Activated naive CD4-positive, alpha-beta T cell treated with anti-CD3 and anti-CD28 coated beads for 36 hours (primary cell): ENCODE measurements at regions of chr4 and their contacts with region 1.

Region 1: GRCh38 chr4:38310446-38311043 is 350.3 kb downstream of the PTTG2 start:
- DNase-seq: peak; percentile 89
- H3K4me3 Mint-ChIP-seq: peak overlapping the region; percentile 10
- H3K27ac Mint-ChIP-seq: peak overlapping the region; percentile 72
- H3K4me1 Mint-ChIP-seq: peaks cover 65% of the 10 kb centered on the region
- H3K27me3 Mint-ChIP-seq: peaks cover 2% of the 10 kb centered on the region

Region 2: GRCh38 chr4:38062088-38062893 is 248.3 kb before region 1 on chr4:
- CTCF ChIA-PET with region 1: interaction called, 9 read pairs
- intact Hi-C with region 1: loop called (anchors 2 kb)
- DNase-seq: peak; percentile 84
- H3K4me3 Mint-ChIP-seq: peak overlapping the region; percentile 79
- H3K27ac Mint-ChIP-seq: peak overlapping the region; percentile 75
- H3K4me1 Mint-ChIP-seq: peaks cover 12% of the 10 kb centered on the region
- H3K27me3 Mint-ChIP-seq: no peaks in the 10 kb centered on the region

Region 3: GRCh38 chr4:38334810-38335537 is 24.4 kb after region 1 on chr4:
- CTCF ChIA-PET with region 1: interaction called, 4 read pairs
- intact Hi-C with region 1: loop called (anchors 1 kb)
- DNase-seq: no peak
- H3K4me3 Mint-ChIP-seq: no peak overlapping the region
- H3K27ac Mint-ChIP-seq: no peak overlapping the region
- H3K4me1 Mint-ChIP-seq: peaks cover 52% of the 10 kb centered on the region
- H3K27me3 Mint-ChIP-seq: no peaks in the 10 kb centered on the region

Region 4: DNA sequence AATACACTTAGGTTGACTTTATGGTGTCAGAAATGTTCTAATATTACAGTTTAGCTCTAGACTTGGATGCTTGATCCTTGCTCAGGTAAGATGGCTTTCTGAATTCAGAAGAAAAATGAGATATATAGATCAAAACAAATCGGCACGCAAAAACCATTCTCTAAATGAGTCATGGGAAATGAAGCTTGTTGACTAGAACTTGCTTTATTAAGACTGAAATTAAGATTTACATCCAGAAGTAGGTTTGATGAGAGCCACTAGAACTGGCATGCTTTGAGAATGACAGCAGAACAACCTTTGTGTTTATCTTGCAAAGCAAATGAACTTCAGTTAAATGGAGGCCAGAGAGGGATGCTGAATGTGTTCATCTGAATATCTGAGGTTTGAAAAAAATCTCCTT is 48.6 kb after region 1 on chr4:
- CTCF ChIA-PET with region 1: no interaction called
- intact Hi-C with region 1: loop called (anchors 1 kb)
- DNase-seq: no peak
- H3K4me3 Mint-ChIP-seq: no peak overlapping the region
- H3K27ac Mint-ChIP-seq: no peak overlapping the region
- H3K4me1 Mint-ChIP-seq: peaks cover 10% of the 10 kb centered on the region
- H3K27me3 Mint-ChIP-seq: no peaks in the 10 kb centered on the region

Region 5: DNA sequence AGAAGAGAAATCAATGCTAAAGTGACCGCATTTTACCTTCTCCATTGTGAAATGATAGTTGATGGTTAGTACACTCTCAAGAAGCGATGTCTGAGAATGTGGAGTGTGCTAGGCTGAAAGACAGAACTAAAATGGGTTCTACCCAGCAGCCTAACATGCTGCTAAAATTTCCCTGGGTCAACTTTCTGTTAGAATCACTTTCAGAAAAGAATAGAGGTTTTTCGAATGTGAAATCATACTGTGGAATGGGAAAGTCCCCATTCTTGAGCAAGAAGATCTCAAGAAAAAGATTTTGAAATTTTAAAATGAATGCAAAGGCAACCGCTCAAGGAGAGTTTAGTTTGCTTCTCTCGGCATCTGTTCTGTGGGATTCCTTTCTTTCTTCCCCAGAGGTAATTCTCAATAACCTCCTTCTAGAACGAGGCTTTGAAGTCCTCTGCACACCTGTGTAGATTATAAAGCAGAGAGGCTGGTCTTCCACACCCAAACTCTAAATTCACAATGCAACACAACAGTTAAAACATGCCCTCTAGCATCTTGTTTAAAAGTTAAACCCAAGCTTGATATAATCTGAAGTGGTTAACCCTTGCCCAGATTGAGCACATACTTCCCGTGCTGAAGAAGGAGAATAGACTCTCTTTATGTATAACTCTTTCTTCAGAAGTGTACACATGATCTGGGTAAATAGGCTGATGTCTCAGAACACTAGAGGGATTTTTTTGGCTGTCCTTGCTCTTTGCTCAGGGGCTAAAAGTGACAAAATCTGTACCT is 144.7 kb after region 1 on chr4:
- CTCF ChIA-PET with region 1: no interaction called
- intact Hi-C with region 1: loop called (anchors 1 kb)
- DNase-seq: peak; percentile 11
- H3K4me3 Mint-ChIP-seq: no peak overlapping the region
- H3K27ac Mint-ChIP-seq: peak overlapping the region; percentile 82
- H3K4me1 Mint-ChIP-seq: peaks cover 52% of the 10 kb centered on the region
- H3K27me3 Mint-ChIP-seq: no peaks in the 10 kb centered on the region

Region 6: GRCh38 chr4:38560768-38561558 is 250.4 kb after region 1 on chr4:
- CTCF ChIA-PET with region 1: no interaction called
- intact Hi-C with region 1: loop called (anchors 1 kb)
- DNase-seq: peak; percentile 60
- H3K4me3 Mint-ChIP-seq: no peak overlapping the region
- H3K27ac Mint-ChIP-seq: no peak overlapping the region
- H3K4me1 Mint-ChIP-seq: peaks cover 16% of the 10 kb centered on the region
- H3K27me3 Mint-ChIP-seq: peaks cover 2% of the 10 kb centered on the region

Region 7: DNA sequence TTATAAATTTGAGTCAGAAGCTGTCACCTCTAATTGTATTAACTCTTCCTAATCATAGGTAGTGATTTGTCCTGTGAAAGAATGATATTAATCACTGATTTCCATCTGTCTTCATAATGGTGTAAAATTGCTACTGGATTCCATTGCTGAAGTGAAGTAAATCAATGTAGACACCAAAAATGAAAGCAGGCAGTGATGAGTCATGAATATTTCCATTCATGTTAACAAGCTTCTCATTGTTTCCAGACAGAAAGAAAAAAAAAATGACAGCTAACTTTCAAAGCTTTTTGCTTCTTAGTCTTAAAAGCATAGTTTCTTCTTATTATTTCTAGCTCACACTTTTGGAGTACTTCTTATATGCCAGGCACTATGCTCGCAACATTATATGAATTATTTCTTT is 578.6 kb after region 1 on chr4:
- CTCF ChIA-PET with region 1: no interaction called
- intact Hi-C with region 1: loop called (anchors 1 kb)
- DNase-seq: no peak
- H3K4me3 Mint-ChIP-seq: peak overlapping the region; percentile 46
- H3K27ac Mint-ChIP-seq: peak overlapping the region; percentile 88
- H3K4me1 Mint-ChIP-seq: peaks cover 23% of the 10 kb centered on the region
- H3K27me3 Mint-ChIP-seq: no peaks in the 10 kb centered on the region

Region 8: GRCh38 chr4:39657465-39657864 is 1346.9 kb after region 1 on chr4:
- CTCF ChIA-PET with region 1: no interaction called
- intact Hi-C with region 1: no loop called
- DNase-seq: no peak
- H3K4me3 Mint-ChIP-seq: no peak overlapping the region
- H3K27ac Mint-ChIP-seq: no peak overlapping the region
- H3K4me1 Mint-ChIP-seq: peaks cover 5% of the 10 kb centered on the region
- H3K27me3 Mint-ChIP-seq: no peaks in the 10 kb centered on the region